PC-3 (cell line): ENCODE measurements at regions of chr7 and their contacts with region 1.

Region 1: GRCh38 chr7:73799267-73800141 is 29.4 kb upstream of the CLDN3 start:
- DNase-seq: peak; percentile 46
- ATAC-seq: peak; percentile 95
- H3K4me3 ChIP-seq: no peak overlapping the region
- H3K27ac ChIP-seq: no peak overlapping the region
- H3K4me1 ChIP-seq: peaks cover 9% of the 10 kb centered on the region
- H3K27me3 ChIP-seq: no peaks in the 10 kb centered on the region
- CTCF ChIP-seq: no peak

Region 2: DNA sequence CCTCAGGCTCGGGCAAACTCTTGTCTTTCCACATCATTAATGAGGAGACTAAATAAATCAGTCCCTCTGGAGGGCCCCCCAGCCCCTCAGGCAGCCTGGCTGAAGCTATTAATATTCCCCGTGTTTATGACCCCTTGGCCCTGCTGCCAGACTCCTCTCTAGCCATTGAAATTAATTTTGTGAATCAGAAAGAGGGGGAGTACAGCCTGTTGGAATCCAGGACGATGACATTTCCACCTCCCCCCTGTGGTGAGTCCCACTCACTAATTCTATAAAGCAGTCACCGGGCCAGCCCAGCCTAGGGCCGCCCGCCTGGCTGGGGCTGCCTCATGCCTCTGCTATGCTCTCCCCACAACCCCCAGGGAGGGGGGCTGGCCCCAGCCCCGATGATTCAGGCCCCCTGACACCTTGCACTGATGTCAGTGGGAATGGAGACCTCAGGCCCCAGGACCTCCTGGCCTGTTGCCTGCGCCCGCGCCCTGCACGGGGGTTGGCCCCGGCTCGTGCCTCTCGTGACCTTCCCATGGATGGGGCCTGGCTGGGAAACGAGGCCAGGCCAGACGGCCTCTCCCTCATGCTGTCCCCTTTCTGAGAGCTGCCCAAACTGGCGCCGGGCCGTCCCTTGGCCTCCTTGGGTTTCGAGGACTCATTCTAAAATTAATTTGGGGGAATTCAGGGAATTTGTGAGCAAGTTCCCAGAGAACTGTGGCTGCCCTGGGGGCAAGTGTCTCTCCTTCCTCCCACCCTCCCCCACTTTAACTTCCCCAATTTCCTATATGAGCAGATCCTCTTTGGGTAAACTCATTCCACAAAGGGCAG is 95.4 kb after region 1 on chr7:
- CTCF ChIA-PET with region 1: no interaction called
- POLR2A ChIA-PET with region 1: no interaction called
- intact Hi-C with region 1: no loop called
- DNase-seq: peak; percentile 82
- ATAC-seq: peak; percentile 85
- H3K4me3 ChIP-seq: no peak overlapping the region
- H3K27ac ChIP-seq: no peak overlapping the region
- H3K4me1 ChIP-seq: peaks cover 16% of the 10 kb centered on the region
- H3K27me3 ChIP-seq: no peaks in the 10 kb centered on the region
- CTCF ChIP-seq: no peak

Region 3: DNA sequence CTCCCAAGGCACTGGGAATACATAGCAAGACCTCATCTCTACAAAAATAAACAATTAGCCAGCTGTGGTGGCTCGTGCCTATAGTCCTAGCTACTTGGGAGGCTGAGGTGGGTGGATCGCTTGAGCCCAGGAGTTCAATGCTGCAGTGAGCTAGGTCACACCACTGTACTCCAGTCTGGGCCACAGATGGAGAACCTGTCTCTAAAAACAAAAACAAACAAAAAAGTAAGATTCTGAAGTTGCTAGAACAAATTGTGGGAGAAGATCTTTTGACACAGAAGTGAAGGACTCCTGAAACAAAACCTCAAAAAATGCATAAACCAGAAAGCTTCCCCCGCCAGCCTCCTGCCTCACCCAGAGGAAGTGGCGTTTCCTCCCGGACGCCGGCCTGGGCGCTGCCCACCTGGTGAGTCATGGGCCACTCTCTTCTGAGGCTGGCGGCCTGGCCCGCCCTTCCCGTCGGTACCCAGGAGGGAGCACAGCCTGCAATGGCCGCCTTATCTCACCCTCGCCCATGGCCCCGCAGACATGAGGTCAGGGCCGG is 203.0 kb after region 1 on chr7:
- CTCF ChIA-PET with region 1: no interaction called
- POLR2A ChIA-PET with region 1: interaction called, 16 read pairs
- intact Hi-C with region 1: no loop called
- DNase-seq: peak; percentile 72
- ATAC-seq: peak; percentile 100
- H3K4me3 ChIP-seq: no peak overlapping the region
- H3K27ac ChIP-seq: peak overlapping the region; percentile 35; the same call in 1 of the 2 replicates
- H3K4me1 ChIP-seq: peaks cover 11% of the 10 kb centered on the region
- H3K27me3 ChIP-seq: no peaks in the 10 kb centered on the region
- CTCF ChIP-seq: no peak